ENCODE measurements at regions of chr13 and their contacts with region 1.

Region 1: GRCh38 chr13:49996951-49997895 is at the start of gene TRIM13:
- DNase-seq: peak; percentile 77 to 82 (median 80)
- H3K4me3 ChIP-seq: peak within 1 kb of the TSS; percentile 85 to 95 (median 86)
- H3K4me3 Mint-ChIP-seq: peak within 1 kb of the TSS; percentile 85 to 90
- H3K27ac ChIP-seq: peak within 1 kb of the TSS; percentile 95 to 100
- H3K27ac Mint-ChIP-seq: peak within 1 kb of the TSS; percentile 89 to 96 (median 95)
- H3K4me1 ChIP-seq: peaks cover 34 to 47% of the 10 kb centered on the region in 2 donors
- H3K4me1 Mint-ChIP-seq: peaks cover 38% of the 10 kb centered on the region
- H3K27me3 ChIP-seq: no peaks in the 10 kb centered on the region
- H3K27me3 Mint-ChIP-seq: no peaks in the 10 kb centered on the region
- CTCF ChIP-seq: peak; percentile 75
- polyA plus RNA-seq, gene TRIM13: 5.8 to 14.1 (median 6.1) TPM

Region 2: GRCh38 chr13:49936085-49936940 is 60.9 kb before region 1 on chr13 and contains the start of gene SPRYD7:
- intact Hi-C with region 1: loop called in 1 of 2 experiments (anchors 5 kb)
- DNase-seq: peak; percentile 95 to 97 (median 97)
- H3K4me3 ChIP-seq: peak within 1 kb of the TSS; percentile 70 to 86 (median 74)
- H3K4me3 Mint-ChIP-seq: peak within 1 kb of the TSS; percentile 96 to 98
- H3K27ac ChIP-seq: peak within 1 kb of the TSS; percentile 49 to 67
- H3K27ac Mint-ChIP-seq: peak within 1 kb of the TSS; percentile 76 to 95 (median 89)
- H3K4me1 ChIP-seq: peaks cover 12 to 22% of the 10 kb centered on the region in 2 donors
- H3K4me1 Mint-ChIP-seq: peaks cover 28% of the 10 kb centered on the region
- H3K27me3 ChIP-seq: no peaks in the 10 kb centered on the region
- H3K27me3 Mint-ChIP-seq: peaks cover 1 to 3% (median 3%) of the 10 kb centered on the region in 3 donors
- CTCF ChIP-seq: peak; percentile 95
- polyA plus RNA-seq, gene SPRYD7: 1.1 to 2.3 (median 1.2) TPM

Region 3: DNA sequence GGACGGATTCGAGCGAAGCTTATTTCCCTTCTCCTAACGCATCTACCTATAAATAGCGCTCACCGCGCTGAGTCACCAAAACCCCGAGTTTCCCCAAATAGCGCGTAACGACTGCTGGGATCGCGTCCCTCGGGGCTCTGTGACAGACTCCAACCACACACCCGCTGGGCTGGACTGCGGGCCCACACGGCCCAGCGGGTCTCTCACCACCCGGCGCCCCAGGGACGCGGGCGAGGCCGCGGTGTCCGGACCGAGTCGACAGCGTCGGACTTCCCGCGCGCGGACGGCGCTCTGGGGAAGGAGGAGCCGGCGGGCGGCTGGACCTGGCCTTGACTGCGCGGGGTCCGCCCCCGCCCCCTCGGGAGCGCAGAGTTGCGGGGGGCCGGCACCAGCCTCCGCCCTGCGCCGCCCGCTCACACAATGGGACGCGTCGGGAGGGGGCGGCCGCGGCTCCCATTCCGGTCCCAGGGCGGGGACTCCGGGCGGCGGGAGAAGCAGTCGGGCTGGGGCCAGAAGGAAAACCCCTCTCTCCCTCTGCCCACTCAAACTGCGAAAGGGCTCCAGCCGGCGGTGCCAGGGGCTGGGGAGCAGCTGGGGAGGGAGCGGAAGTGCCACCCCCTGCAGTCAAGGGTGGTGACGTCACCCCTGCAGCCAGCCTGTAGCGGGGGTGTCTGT is 126.8 kb after region 1 on chr13:
- intact Hi-C with region 1: loop called (anchors 10 kb)
- DNase-seq: peak; percentile 94 to 99 (median 96)
- H3K4me3 ChIP-seq: peak overlapping the region; percentile 85 to 100 (median 97)
- H3K4me3 Mint-ChIP-seq: peak overlapping the region; percentile 86 to 95
- H3K27ac ChIP-seq: peak overlapping the region; percentile 99 to 100
- H3K27ac Mint-ChIP-seq: peak overlapping the region; percentile 94 to 99 (median 98)
- H3K4me1 ChIP-seq: peaks cover 59 to 68% of the 10 kb centered on the region in 2 donors
- H3K4me1 Mint-ChIP-seq: peaks cover 61% of the 10 kb centered on the region
- H3K27me3 ChIP-seq: peaks cover 0 to 13% of the 10 kb centered on the region in 2 donors
- H3K27me3 Mint-ChIP-seq: peaks cover 5 to 14% (median 13%) of the 10 kb centered on the region in 3 donors
- CTCF ChIP-seq: no peak

Region 4: DNA sequence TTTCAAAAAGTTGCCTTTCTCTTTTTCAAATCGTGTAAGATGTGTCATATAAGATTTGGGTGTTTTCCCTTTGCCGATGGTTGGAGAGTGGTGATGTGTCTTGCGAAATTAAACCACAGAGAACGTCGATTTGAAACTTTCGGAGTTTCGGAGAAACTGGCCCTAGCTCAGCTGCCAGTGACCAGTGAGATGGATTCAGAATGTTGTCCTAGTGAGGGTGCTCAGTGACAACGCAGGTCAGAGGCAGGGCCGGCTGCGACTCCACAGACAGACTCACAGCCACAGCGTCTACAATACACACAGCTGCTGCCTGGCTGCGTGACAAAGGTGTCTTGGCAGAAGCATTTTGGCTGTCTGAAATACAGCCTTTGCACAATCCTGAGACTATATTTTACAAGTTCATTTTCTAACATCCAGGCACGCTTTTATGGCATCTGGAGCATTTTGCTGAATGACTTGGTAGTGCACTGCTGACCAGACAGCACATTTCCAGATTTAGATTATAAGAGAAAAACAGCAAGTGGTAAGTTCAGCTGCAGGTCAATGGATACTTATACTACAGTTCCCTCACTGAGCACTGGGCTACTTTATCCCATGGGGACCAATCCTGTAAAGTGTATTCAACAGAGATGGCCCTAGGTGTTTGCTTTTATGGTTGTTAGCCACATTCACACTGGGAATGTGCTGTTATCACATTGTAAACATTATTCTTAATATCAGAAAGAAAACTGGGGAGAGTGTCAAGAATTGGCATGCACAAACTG is 225.5 kb after region 1 on chr13:
- intact Hi-C with region 1: loop called in 1 of 2 experiments (anchors 10 kb)
- DNase-seq: peak; percentile 94 to 99 (median 96)
- H3K4me3 ChIP-seq: peak overlapping the region in 1 of 3 experiments; percentile 13
- H3K4me3 Mint-ChIP-seq: peak overlapping the region; percentile 58 to 75
- H3K27ac ChIP-seq: peak overlapping the region; percentile 93 to 98
- H3K27ac Mint-ChIP-seq: peak overlapping the region; percentile 95 to 99 (median 98)
- H3K4me1 ChIP-seq: peaks cover 51 to 62% of the 10 kb centered on the region in 2 donors
- H3K4me1 Mint-ChIP-seq: peaks cover 69% of the 10 kb centered on the region
- H3K27me3 ChIP-seq: no peaks in the 10 kb centered on the region
- H3K27me3 Mint-ChIP-seq: no peaks in the 10 kb centered on the region
- CTCF ChIP-seq: no peak

Region 5: DNA sequence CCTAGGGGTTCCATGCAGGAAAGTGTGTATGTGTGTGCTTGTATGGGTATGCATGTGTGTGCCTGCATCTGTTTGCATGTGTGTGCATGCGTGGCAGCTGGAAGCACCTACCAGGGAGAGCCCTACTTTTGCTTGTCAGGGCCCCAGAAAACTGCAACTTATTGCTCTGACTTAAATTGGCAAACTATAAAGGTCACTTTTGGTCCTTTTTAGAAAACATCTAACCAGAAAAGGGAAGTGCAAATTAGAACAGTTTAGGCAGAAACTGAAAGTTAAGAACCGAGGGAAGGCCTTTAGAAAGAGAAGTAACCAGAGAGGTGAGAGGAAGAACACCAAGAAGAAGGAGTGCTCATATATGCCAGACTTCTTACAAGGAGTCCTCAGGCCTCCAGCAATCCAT is 813.8 kb after region 1 on chr13:
- intact Hi-C with region 1: loop called in 1 of 2 experiments (anchors 10 kb)
- DNase-seq: peak; percentile 52 to 64 (median 54)
- H3K4me3 ChIP-seq: peak overlapping the region in 1 of 3 experiments; percentile 35
- H3K4me3 Mint-ChIP-seq: peak overlapping the region in 1 of 2 donors; percentile 67
- H3K27ac ChIP-seq: peak overlapping the region; percentile 41 to 64
- H3K27ac Mint-ChIP-seq: peak overlapping the region; percentile 19 to 85 (median 75)
- H3K4me1 ChIP-seq: peaks cover 30 to 42% of the 10 kb centered on the region in 2 donors
- H3K4me1 Mint-ChIP-seq: peaks cover 38% of the 10 kb centered on the region
- H3K27me3 ChIP-seq: no peaks in the 10 kb centered on the region
- H3K27me3 Mint-ChIP-seq: no peaks in the 10 kb centered on the region
- CTCF ChIP-seq: no peak